Breast epithelium (tissue), 4 donors: ENCODE measurements at regions of chr18 and their contacts with region 1.

Region 1: GRCh38 chr18:47724186-47724975 is 206.1 kb downstream of the SMAD2 start:
- DNase-seq: no peak
- H3K4me3 ChIP-seq: no peak overlapping the region
- H3K27ac ChIP-seq: no peak overlapping the region
- H3K4me1 ChIP-seq: no peaks in the 10 kb centered on the region
- H3K27me3 ChIP-seq: no peaks in the 10 kb centered on the region
- CTCF ChIP-seq: no peak
- POLR2A ChIP-seq: no peak

Region 2: DNA sequence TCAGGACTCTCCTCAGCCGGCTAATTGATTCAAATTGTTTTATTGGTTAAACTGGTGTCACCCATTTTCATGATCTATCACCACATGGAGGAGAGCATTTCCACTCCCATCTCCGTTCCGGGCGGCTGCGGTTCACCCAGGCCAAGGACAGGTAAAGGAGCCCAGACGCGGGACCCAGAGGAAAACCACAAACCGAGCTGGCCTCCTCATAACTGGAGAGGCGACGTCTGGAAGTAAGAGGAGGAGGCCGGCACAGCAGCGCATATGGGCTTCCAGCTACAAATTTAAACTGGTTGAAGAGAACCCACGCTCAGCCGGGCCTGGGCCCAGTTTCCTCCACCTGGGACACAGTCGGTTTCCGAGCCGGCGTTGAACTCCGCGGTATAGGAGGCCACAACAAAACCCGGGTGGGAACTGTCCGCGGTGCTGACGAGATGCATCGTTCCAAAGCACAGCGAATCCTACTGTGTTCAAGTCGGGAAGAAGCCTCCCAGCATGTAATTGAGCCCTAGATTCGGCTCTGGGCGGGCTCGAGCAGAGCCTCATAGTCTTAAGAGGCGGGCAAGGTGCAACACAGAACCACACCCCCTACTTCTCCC is 469.9 kb before region 1 on chr18:
- intact Hi-C with region 1: loop called (anchors 10 kb)
- DNase-seq: no peak
- H3K4me3 ChIP-seq: no peak overlapping the region
- H3K27ac ChIP-seq: no peak overlapping the region
- H3K4me1 ChIP-seq: no peaks in the 10 kb centered on the region
- H3K27me3 ChIP-seq: peaks cover 2 to 89% of the 10 kb centered on the region in 2 donors
- CTCF ChIP-seq: no peak
- POLR2A ChIP-seq: no peak